CD8-positive, alpha-beta T cell (primary cell): ENCODE measurements at regions of chr1 and their contacts with region 1.

Region 1: GRCh38 chr1:25895365-25895993 is 10.7 kb downstream of the STMN1 start:
- DNase-seq: peak; percentile 86 to 96 (median 92)
- ATAC-seq: peak; percentile 100
- H3K4me3 ChIP-seq: no peak overlapping the region
- H3K4me3 Mint-ChIP-seq: no peak overlapping the region
- H3K27ac ChIP-seq: no peak overlapping the region
- H3K27ac Mint-ChIP-seq: no peak overlapping the region
- H3K4me1 ChIP-seq: peaks cover 6% of the 10 kb centered on the region
- H3K4me1 Mint-ChIP-seq: peaks cover 9% of the 10 kb centered on the region
- H3K27me3 ChIP-seq: no peaks in the 10 kb centered on the region
- H3K27me3 Mint-ChIP-seq: no peaks in the 10 kb centered on the region
- CTCF ChIP-seq: peak; percentile 99

Region 2: DNA sequence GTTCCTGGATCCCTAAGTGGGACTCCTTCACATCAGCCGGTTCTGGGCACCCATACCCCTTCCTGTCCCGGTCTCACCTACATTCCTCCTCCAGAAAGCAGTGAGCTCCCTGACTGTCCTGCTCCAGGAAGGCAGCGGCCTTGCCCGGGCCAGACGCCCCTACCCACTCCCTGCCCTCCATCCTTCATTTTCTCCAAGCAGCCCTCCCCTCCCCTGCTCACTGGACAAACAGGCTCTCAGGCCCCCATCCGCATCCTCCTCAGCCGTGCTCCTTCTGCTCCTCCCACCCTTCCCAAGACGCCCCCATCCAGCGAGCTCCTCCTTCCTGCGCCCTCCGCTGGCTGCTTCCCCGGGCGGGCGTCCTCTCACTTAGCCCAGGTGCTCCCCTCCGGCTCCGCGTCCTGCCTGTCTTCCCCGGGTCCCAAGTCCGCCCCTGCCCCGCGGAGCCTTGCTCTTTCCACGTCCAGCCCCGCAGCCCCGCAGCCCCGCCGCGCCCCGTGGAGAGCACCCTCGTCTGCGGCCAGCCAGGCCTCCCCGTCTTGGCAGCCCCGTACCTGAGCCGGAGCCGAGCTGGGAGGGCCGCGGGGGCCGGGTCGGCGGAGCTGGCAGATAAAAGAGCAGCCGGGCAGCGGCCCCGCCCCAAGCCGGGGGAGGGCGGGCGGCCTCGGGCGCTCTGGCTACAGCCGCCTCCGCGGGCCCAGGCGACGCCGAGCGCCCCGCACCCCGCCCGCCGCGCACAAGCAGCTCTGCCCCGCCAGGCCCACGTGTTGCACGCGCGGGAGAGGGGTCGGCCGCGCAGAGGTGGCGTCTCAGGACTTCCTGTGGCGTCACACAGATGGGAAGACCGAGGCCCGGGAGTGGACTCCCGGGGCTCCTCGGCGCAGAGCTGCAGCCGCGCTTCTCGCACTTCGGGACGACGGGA is 20.3 kb before region 1 on chr1 and contains the start of gene PAQR7:
- CTCF ChIA-PET with region 1: interaction called, 24 read pairs
- POLR2A ChIA-PET with region 1: interaction called, 3 read pairs
- intact Hi-C with region 1: no loop called
- DNase-seq: peak in 8 of 9 experiments; percentile 49 to 80 (median 58)
- ATAC-seq: peak; percentile 83
- H3K4me3 ChIP-seq: peak within 1 kb of the TSS; percentile 58 to 76
- H3K4me3 Mint-ChIP-seq: peak within 1 kb of the TSS; percentile 85
- H3K27ac ChIP-seq: peak within 1 kb of the TSS; percentile 14 to 33
- H3K27ac Mint-ChIP-seq: peak within 1 kb of the TSS; percentile 64
- H3K4me1 ChIP-seq: peaks cover 11% of the 10 kb centered on the region
- H3K4me1 Mint-ChIP-seq: peaks cover 8% of the 10 kb centered on the region
- H3K27me3 ChIP-seq: no peaks in the 10 kb centered on the region
- H3K27me3 Mint-ChIP-seq: no peaks in the 10 kb centered on the region
- CTCF ChIP-seq: no peak
- total RNA-seq, gene PAQR7: 2.1 to 2.3 TPM

Region 3: DNA sequence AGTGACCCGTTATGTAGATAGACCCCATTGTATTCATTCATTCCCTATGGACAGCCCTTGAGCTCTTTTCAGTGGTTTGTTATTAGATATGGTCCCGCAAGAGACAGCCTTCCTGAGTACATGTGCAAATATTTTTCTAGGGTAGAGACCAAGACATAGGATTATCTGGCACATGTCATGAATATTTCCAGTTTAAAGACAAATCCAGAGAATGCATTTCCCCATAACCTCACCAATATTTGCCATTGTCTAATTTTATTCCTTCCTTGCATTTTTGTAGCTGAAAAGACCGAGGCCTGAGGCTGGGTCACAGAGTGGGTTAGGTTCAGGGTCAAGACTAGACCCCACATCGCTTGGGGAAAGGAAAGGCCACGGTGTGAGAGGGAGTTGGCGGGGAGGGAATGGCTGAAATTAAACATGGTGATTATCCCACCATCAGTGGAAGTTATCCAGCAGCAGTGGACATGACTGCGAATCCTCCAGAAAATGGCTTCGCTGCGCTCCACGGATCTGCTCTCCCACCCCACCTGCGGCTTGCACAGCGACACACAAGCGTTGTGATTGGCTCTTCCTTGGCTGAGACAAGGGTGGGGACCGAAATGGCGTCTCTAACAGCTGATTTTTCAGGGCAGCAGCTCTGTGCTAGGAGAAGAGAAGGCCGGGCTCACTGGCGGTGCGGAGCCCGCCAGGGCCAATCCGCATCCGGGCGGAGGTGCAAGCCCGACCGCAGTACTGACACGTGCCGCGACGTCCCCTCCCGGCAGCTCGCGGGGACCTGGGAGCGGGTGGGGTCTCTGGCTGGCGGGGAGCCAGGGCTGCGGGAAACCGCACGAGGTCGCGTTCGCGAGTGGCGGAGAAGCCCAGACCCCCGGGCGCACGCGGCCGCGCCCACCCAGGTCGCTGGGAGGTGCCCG is 26.8 kb after region 1 on chr1:
- CTCF ChIA-PET with region 1: interaction called, 23 read pairs
- POLR2A ChIA-PET with region 1: interaction called, 6 read pairs
- intact Hi-C with region 1: no loop called
- DNase-seq: peak in 7 of 9 experiments; percentile 38 to 78 (median 62)
- ATAC-seq: peak; percentile 75
- H3K4me3 ChIP-seq: peak overlapping the region; percentile 57 to 63
- H3K4me3 Mint-ChIP-seq: peak overlapping the region; percentile 88
- H3K27ac ChIP-seq: peak overlapping the region; percentile 6 to 24
- H3K27ac Mint-ChIP-seq: peak overlapping the region; percentile 70
- H3K4me1 ChIP-seq: peaks cover 27% of the 10 kb centered on the region
- H3K4me1 Mint-ChIP-seq: peaks cover 29% of the 10 kb centered on the region
- H3K27me3 ChIP-seq: no peaks in the 10 kb centered on the region
- H3K27me3 Mint-ChIP-seq: no peaks in the 10 kb centered on the region
- CTCF ChIP-seq: no peak

Region 4: GRCh38 chr1:25997828-25998761 is 102.6 kb after region 1 on chr1 and contains the start of gene PAFAH2:
- CTCF ChIA-PET with region 1: interaction called, 442 read pairs
- POLR2A ChIA-PET with region 1: interaction called, 53 read pairs
- intact Hi-C with region 1: loop called (anchors 1 kb)
- DNase-seq: peak; percentile 93 to 100 (median 96)
- ATAC-seq: peak; percentile 96
- H3K4me3 ChIP-seq: peak within 1 kb of the TSS; percentile 62 to 72
- H3K4me3 Mint-ChIP-seq: peak within 1 kb of the TSS; percentile 92
- H3K27ac ChIP-seq: peak within 1 kb of the TSS; percentile 79 to 87
- H3K27ac Mint-ChIP-seq: peak within 1 kb of the TSS; percentile 99
- H3K4me1 ChIP-seq: peaks cover 19% of the 10 kb centered on the region
- H3K4me1 Mint-ChIP-seq: peaks cover 42% of the 10 kb centered on the region
- H3K27me3 ChIP-seq: no peaks in the 10 kb centered on the region
- H3K27me3 Mint-ChIP-seq: no peaks in the 10 kb centered on the region
- CTCF ChIP-seq: peak; percentile 92
- total RNA-seq, gene PAFAH2: 9.1 to 11.8 TPM

Region 5: GRCh38 chr1:26145041-26145959 is 249.8 kb after region 1 on chr1:
- CTCF ChIA-PET with region 1: interaction called, 3 read pairs
- POLR2A ChIA-PET with region 1: no interaction called
- intact Hi-C with region 1: loop called in 1 of 2 experiments (anchors 5 kb)
- DNase-seq: peak in 8 of 9 experiments; percentile 62 to 88 (median 81)
- ATAC-seq: peak; percentile 95
- H3K4me3 ChIP-seq: no peak overlapping the region
- H3K4me3 Mint-ChIP-seq: no peak overlapping the region
- H3K27ac ChIP-seq: no peak overlapping the region
- H3K27ac Mint-ChIP-seq: no peak overlapping the region
- H3K4me1 ChIP-seq: peaks cover 6% of the 10 kb centered on the region
- H3K4me1 Mint-ChIP-seq: peaks cover 5% of the 10 kb centered on the region
- H3K27me3 ChIP-seq: no peaks in the 10 kb centered on the region
- H3K27me3 Mint-ChIP-seq: no peaks in the 10 kb centered on the region
- CTCF ChIP-seq: peak; percentile 87